Endothelial cell of umbilical vein (primary cell): ENCODE measurements at regions of chr14 and their contacts with region 1.

Region 1: GRCh38 chr14:61296719-61297502 is 15.8 kb upstream of the TMEM30B start:
- DNase-seq: peak; percentile 77
- H3K4me3 ChIP-seq: no peak overlapping the region
- H3K27ac ChIP-seq: peak overlapping the region; percentile 47
- H3K4me1 ChIP-seq: peaks cover 29% of the 10 kb centered on the region
- H3K27me3 ChIP-seq: no peaks in the 10 kb centered on the region
- CTCF ChIP-seq: peak; percentile 40 to 51
- POLR2A ChIP-seq: no peak

Region 2: GRCh38 chr14:61430066-61430739 is 133.3 kb after region 1 on chr14:
- CTCF ChIA-PET with region 1: interaction called, 14 read pairs
- POLR2A ChIA-PET with region 1: no interaction called
- dilution Hi-C with region 1: no loop called
- intact Hi-C with region 1: loop called (anchors 5 kb)
- DNase-seq: no peak
- H3K4me3 ChIP-seq: no peak overlapping the region
- H3K27ac ChIP-seq: no peak overlapping the region
- H3K4me1 ChIP-seq: peaks cover 46% of the 10 kb centered on the region
- H3K27me3 ChIP-seq: no peaks in the 10 kb centered on the region
- CTCF ChIP-seq: no peak
- POLR2A ChIP-seq: no peak

Region 3: GRCh38 chr14:61456720-61457119 is 159.8 kb after region 1 on chr14:
- CTCF ChIA-PET with region 1: interaction called, 24 read pairs
- POLR2A ChIA-PET with region 1: no interaction called
- dilution Hi-C with region 1: loop called (anchors 25 kb)
- intact Hi-C with region 1: loop called (anchors 1 kb)
- DNase-seq: peak; percentile 72
- H3K4me3 ChIP-seq: no peak overlapping the region
- H3K27ac ChIP-seq: no peak overlapping the region
- H3K4me1 ChIP-seq: peaks cover 22% of the 10 kb centered on the region
- H3K27me3 ChIP-seq: no peaks in the 10 kb centered on the region
- CTCF ChIP-seq: peak; percentile 75 to 79
- POLR2A ChIP-seq: no peak

Region 4: GRCh38 chr14:61761959-61762786 is 465.3 kb after region 1 on chr14 and contains the start of gene SNAPC1:
- CTCF ChIA-PET with region 1: no interaction called
- POLR2A ChIA-PET with region 1: no interaction called
- dilution Hi-C with region 1: no loop called
- intact Hi-C with region 1: loop called (anchors 10 kb)
- DNase-seq: peak; percentile 98
- H3K4me3 ChIP-seq: peak within 1 kb of the TSS; percentile 63 to 86 (median 83)
- H3K27ac ChIP-seq: peak within 1 kb of the TSS; percentile 66
- H3K4me1 ChIP-seq: peaks cover 29% of the 10 kb centered on the region
- H3K27me3 ChIP-seq: no peaks in the 10 kb centered on the region
- CTCF ChIP-seq: no peak
- POLR2A ChIP-seq: peak; percentile 89
- total RNA-seq, gene SNAPC1: 12.7 and 21.8 TPM in 2 replicates